PC-3 (cell line): ENCODE measurements at regions of chr5 and their contacts with region 1.

Region 1: GRCh38 chr5:83473346-83474163 is 2.0 kb downstream of the VCAN start:
- DNase-seq: peak; percentile 91
- ATAC-seq: peak; percentile 71
- H3K4me3 ChIP-seq: peak overlapping the region; percentile 81
- H3K27ac ChIP-seq: peak overlapping the region; percentile 87
- H3K4me1 ChIP-seq: peaks cover 31% of the 10 kb centered on the region
- H3K27me3 ChIP-seq: peaks cover 19% of the 10 kb centered on the region
- CTCF ChIP-seq: peak; percentile 92

Region 2: GRCh38 chr5:82364497-82364896 is 1109.1 kb before region 1 on chr5:
- CTCF ChIA-PET with region 1: no interaction called
- POLR2A ChIA-PET with region 1: no interaction called
- intact Hi-C with region 1: loop called (anchors 1 kb)
- DNase-seq: peak; percentile 66
- ATAC-seq: peak; percentile 70
- H3K4me3 ChIP-seq: no peak overlapping the region
- H3K27ac ChIP-seq: peak overlapping the region; percentile 97
- H3K4me1 ChIP-seq: peaks cover 22% of the 10 kb centered on the region
- H3K27me3 ChIP-seq: no peaks in the 10 kb centered on the region
- CTCF ChIP-seq: peak; percentile 61

Region 3: DNA sequence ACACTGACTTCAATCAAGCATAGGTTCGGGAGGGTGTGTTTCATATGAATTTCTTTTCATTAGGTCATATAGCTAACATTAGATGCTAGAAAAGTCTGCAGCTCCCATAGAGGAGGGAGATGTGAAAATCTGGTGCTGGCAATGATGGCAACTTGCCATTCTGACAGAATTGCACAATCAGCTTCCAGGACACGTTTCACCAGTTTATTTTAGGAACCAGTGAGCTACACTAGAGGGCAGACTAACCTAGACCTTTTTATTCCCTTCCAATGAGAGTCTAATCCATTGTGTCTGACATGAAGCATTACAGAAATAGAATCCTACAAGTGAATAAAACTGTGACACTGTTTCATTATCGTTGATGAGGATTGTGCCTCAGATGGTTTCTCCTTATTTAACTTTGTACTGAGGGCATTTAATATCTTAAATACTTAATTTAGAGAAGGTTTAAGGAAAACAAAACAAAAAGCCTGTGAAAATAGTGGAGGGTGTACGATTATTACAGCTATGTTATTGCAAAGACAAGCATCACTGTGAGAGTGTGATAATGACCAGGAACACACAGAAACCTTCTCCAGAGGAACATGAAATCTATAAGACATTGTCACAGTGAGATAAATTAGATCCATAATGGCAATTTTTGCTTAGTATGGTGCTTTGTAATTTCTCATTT is 832.1 kb before region 1 on chr5:
- CTCF ChIA-PET with region 1: interaction called, 6 read pairs
- POLR2A ChIA-PET with region 1: no interaction called
- intact Hi-C with region 1: loop called (anchors 1 kb)
- DNase-seq: peak; percentile 89
- ATAC-seq: peak; percentile 88
- H3K4me3 ChIP-seq: no peak overlapping the region
- H3K27ac ChIP-seq: 0 out of 2 replicates have a peak overlapping the region, but pooled peaks have one; percentile 10
- H3K4me1 ChIP-seq: peaks cover 22% of the 10 kb centered on the region
- H3K27me3 ChIP-seq: no peaks in the 10 kb centered on the region
- CTCF ChIP-seq: peak; percentile 76

Region 4: GRCh38 chr5:83076742-83077661 is 396.6 kb before region 1 on chr5 and contains the starts of genes TMEM167A and XRCC4:
- CTCF ChIA-PET with region 1: no interaction called
- POLR2A ChIA-PET with region 1: no interaction called
- intact Hi-C with region 1: loop called (anchors 5 kb)
- DNase-seq: peak; percentile 98
- ATAC-seq: peak; percentile 100
- H3K4me3 ChIP-seq: peak within 1 kb of the TSS; percentile 94
- H3K27ac ChIP-seq: peak within 1 kb of the TSS; percentile 53
- H3K4me1 ChIP-seq: peaks cover 19% of the 10 kb centered on the region
- H3K27me3 ChIP-seq: no peaks in the 10 kb centered on the region
- CTCF ChIP-seq: no peak
- total RNA-seq, gene TMEM167A: 25.1 and 35.7 TPM in 2 replicates
- total RNA-seq, gene XRCC4: 11.5 and 13.8 TPM in 2 replicates

Region 5: DNA sequence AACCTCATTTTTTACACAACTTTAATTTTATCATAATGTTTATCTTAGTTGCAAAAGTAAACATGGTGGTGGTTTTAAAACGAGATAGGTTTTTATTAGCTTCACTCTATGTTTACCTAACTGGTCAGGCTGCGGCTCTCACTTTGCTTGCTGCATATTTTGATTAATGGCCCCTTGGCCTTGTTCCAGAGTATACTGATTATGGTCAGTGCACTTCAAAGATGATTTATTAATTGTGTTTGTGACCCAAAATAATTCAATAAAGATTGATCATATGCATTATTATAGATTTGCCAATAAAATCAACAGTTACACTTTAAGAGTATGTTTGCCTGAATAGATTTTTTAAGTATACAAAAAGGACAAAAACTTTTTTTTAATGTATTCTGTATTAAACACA is 208.2 kb before region 1 on chr5:
- CTCF ChIA-PET with region 1: interaction called, 8 read pairs
- POLR2A ChIA-PET with region 1: no interaction called
- intact Hi-C with region 1: loop called (anchors 5 kb)
- DNase-seq: peak; percentile 88
- ATAC-seq: peak; percentile 99
- H3K4me3 ChIP-seq: no peak overlapping the region
- H3K27ac ChIP-seq: no peak overlapping the region
- H3K4me1 ChIP-seq: peaks cover 11% of the 10 kb centered on the region; the same call in 1 of the 2 replicates
- H3K27me3 ChIP-seq: peaks cover 13% of the 10 kb centered on the region
- CTCF ChIP-seq: no peak

Region 6: GRCh38 chr5:83517072-83517687 is 43.6 kb after region 1 on chr5:
- CTCF ChIA-PET with region 1: no interaction called
- POLR2A ChIA-PET with region 1: no interaction called
- intact Hi-C with region 1: loop called (anchors 1 kb)
- DNase-seq: peak; percentile 60
- ATAC-seq: peak; percentile 76
- H3K4me3 ChIP-seq: no peak overlapping the region
- H3K27ac ChIP-seq: peak overlapping the region; percentile 62
- H3K4me1 ChIP-seq: peaks cover 25% of the 10 kb centered on the region
- H3K27me3 ChIP-seq: no peaks in the 10 kb centered on the region
- CTCF ChIP-seq: peak; percentile 30; the same call in 1 of the 2 replicates